BJ (cell line): ENCODE measurements at regions of chr7 and their contacts with region 1.

Region 1: GRCh38 chr7:106041140-106041717 is 70.9 kb downstream of the SYPL1 start:
- DNase-seq: no peak
- H3K4me3 ChIP-seq: no peak overlapping the region
- H3K27me3 ChIP-seq: peaks cover 6% of the 10 kb centered on the region
- CTCF ChIP-seq: peak; percentile 62

Region 2: GRCh38 chr7:105759670-105760550 is 281.3 kb before region 1 on chr7:
- CTCF ChIA-PET with region 1: interaction called, 128 read pairs
- POLR2A ChIA-PET with region 1: no interaction called
- DNase-seq: no peak
- H3K4me3 ChIP-seq: no peak overlapping the region
- H3K27me3 ChIP-seq: no peaks in the 10 kb centered on the region
- CTCF ChIP-seq: peak; percentile 52

Region 3: GRCh38 chr7:106009403-106010226 is 31.6 kb before region 1 on chr7:
- CTCF ChIA-PET with region 1: interaction called, 11 read pairs
- POLR2A ChIA-PET with region 1: no interaction called
- DNase-seq: peak; percentile 97
- H3K4me3 ChIP-seq: no peak overlapping the region
- H3K27me3 ChIP-seq: no peaks in the 10 kb centered on the region; the same call in 1 of the 2 replicates
- CTCF ChIP-seq: peak; percentile 93

Region 4: GRCh38 chr7:106080300-106080987 is 39.2 kb after region 1 on chr7:
- CTCF ChIA-PET with region 1: no interaction called
- POLR2A ChIA-PET with region 1: interaction called, 19 read pairs
- DNase-seq: no peak
- H3K4me3 ChIP-seq: no peak overlapping the region
- H3K27me3 ChIP-seq: no peaks in the 10 kb centered on the region
- CTCF ChIP-seq: no peak